ENCODE measurements at regions of chr7 and their contacts with region 1.

Region 1: GRCh38 chr7:156493942-156494341 is 146.6 kb upstream of the RNF32 start:
- DNase-seq: no peak
- ATAC-seq: no peak

Region 2: DNA sequence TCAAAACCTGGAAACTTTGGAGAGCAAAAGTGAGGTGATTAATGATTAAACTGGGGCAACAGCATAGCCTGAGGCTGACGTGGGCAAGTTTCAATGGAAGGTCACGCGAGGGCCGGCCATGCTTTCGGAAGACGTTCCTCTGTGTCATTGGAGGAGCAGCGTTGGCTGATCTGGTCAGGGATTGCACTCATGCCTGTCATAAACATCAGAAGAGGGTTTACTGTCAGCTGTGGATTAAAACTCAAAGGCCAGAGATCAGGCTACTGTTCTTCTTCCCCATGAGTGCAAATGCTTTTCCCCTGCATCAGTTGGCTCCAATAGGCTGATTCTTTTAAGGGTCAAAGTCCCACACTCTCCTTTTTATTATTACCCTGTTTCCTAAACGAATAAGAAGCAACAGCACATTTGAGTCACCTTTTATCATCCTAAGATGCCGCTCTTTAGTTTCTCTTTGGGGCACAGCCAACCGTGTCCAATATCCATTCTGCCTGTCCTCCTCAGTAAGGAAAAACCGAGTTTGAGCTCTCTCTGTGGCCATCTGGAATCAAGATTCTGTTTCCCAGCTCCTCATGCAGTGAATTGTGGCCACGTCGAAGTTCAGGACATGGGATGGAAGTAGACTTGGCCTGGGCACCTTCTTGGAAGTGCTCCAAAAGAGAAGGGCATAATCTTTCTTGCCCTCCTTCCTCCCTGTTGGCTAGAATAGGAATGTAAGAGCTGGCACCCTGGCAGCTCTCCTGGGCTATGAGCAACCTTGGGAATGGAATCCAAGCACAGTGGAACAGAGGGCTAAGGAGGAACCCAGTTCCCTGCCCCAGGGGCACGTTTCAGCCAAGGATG is 1258.8 kb before region 1 on chr7:
- intact Hi-C with region 1: loop called (anchors 5 kb)
- DNase-seq: no peak
- ATAC-seq: no peak